ENCODE measurements at regions of chr9 and their contacts with region 1.

Region 1: GRCh38 chr9:127828262-127829031 is 25.8 kb downstream of the FPGS start:
- DNase-seq: peak; percentile 92 to 95 (median 93)
- ATAC-seq: peak; percentile 79 to 90 (median 86)
- H3K4me3 ChIP-seq: peak overlapping the region in 10 of 12 donors; percentile 15 to 44 (median 27)
- H3K27ac ChIP-seq: peak overlapping the region; percentile 68 to 96 (median 80)
- H3K4me1 ChIP-seq: peaks cover 12 to 84% (median 61%) of the 10 kb centered on the region in 12 donors
- H3K27me3 ChIP-seq: no peaks in the 10 kb centered on the region
- CTCF ChIP-seq: peak in 3 of 12 donors; percentile 19 to 33 (median 22)
- POLR2A ChIP-seq: peak in 1 of 2 donors; percentile 87

Region 2: DNA sequence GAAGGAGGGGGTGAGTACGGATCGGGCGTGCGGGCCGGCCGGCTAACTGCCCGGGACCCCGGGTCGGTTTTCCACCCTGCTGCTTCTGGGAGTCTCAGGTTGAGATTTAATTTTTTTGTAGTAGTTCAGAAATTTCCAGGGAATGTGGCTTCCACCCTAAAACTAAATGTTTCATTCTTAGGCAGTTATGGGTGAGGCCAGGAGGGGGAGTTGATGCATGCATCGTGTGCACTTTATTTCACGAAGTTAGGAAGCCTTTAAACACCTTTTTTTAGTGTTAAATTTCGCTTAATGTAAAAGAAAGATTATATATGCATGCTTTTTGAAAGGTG is 41.7 kb before region 1 on chr9:
- intact Hi-C with region 1: no loop called
- DNase-seq: no peak
- ATAC-seq: no peak
- H3K4me3 ChIP-seq: peak overlapping the region; percentile 76 to 100 (median 98)
- H3K27ac ChIP-seq: peak overlapping the region; percentile 88 to 100 (median 96)
- H3K4me1 ChIP-seq: peaks cover 0 to 76% (median 47%) of the 10 kb centered on the region in 12 donors
- H3K27me3 ChIP-seq: no peaks in the 10 kb centered on the region
- CTCF ChIP-seq: peak in 10 of 12 donors; percentile 6 to 57 (median 36)
- POLR2A ChIP-seq: no peak

Region 3: GRCh38 chr9:127809512-127810377 is 18.7 kb before region 1 on chr9:
- intact Hi-C with region 1: no loop called
- DNase-seq: peak in 1 of 5 donors; percentile 47
- ATAC-seq: peak in 2 of 4 donors; percentile 30 to 35
- H3K4me3 ChIP-seq: peak overlapping the region in 1 of 12 donors; percentile 25
- H3K27ac ChIP-seq: peak overlapping the region in 9 of 12 donors; percentile 9 to 76 (median 48)
- H3K4me1 ChIP-seq: peaks cover 0 to 25% (median 5%) of the 10 kb centered on the region in 12 donors
- H3K27me3 ChIP-seq: no peaks in the 10 kb centered on the region
- CTCF ChIP-seq: no peak
- POLR2A ChIP-seq: no peak

Region 4: GRCh38 chr9:127854184-127854806 is 25.8 kb after region 1 on chr9 and contains the start of gene ENG:
- intact Hi-C with region 1: loop called in 1 of 10 experiments (anchors 2 kb)
- DNase-seq: peak; percentile 91 to 94 (median 92)
- ATAC-seq: peak; percentile 54 to 83 (median 73)
- H3K4me3 ChIP-seq: peak within 1 kb of the TSS; percentile 49 to 94 (median 88)
- H3K27ac ChIP-seq: peak within 1 kb of the TSS; percentile 85 to 98 (median 95)
- H3K4me1 ChIP-seq: peaks cover 14 to 76% (median 51%) of the 10 kb centered on the region in 12 donors
- H3K27me3 ChIP-seq: no peaks in the 10 kb centered on the region
- CTCF ChIP-seq: no peak
- POLR2A ChIP-seq: peak in 1 of 2 donors; percentile 75
- total RNA-seq, gene ENG: 116 to 252 (median 133) TPM

Region 5: GRCh38 chr9:127862075-127863011 is 33.9 kb after region 1 on chr9:
- intact Hi-C with region 1: loop called in 6 of 10 experiments (anchors 2 to 5 kb)
- DNase-seq: peak; percentile 93 to 95 (median 93)
- ATAC-seq: peak; percentile 76 to 86 (median 84)
- H3K4me3 ChIP-seq: peak overlapping the region in 3 of 12 donors; percentile 2 to 12 (median 11)
- H3K27ac ChIP-seq: peak overlapping the region; percentile 80 to 98 (median 94)
- H3K4me1 ChIP-seq: peaks cover 34 to 79% (median 64%) of the 10 kb centered on the region in 12 donors
- H3K27me3 ChIP-seq: no peaks in the 10 kb centered on the region
- CTCF ChIP-seq: no peak
- POLR2A ChIP-seq: no peak

Region 6: GRCh38 chr9:127899128-127899946 is 70.9 kb after region 1 on chr9 and contains the start of gene ST6GALNAC6:
- intact Hi-C with region 1: no loop called
- DNase-seq: peak; percentile 78 to 91 (median 81)
- ATAC-seq: peak; percentile 59 to 88 (median 73)
- H3K4me3 ChIP-seq: peak within 1 kb of the TSS; percentile 57 to 98 (median 94)
- H3K27ac ChIP-seq: peak within 1 kb of the TSS; percentile 84 to 97 (median 93)
- H3K4me1 ChIP-seq: peaks cover 7 to 56% (median 46%) of the 10 kb centered on the region in 12 donors
- H3K27me3 ChIP-seq: no peaks in the 10 kb centered on the region
- CTCF ChIP-seq: peak in 5 of 12 donors; percentile 7 to 30 (median 16)
- POLR2A ChIP-seq: peak in 1 of 2 donors; percentile 58
- total RNA-seq, gene ST6GALNAC6: 28.4 to 75.9 (median 45.6) TPM

Measured in heart left ventricle (tissue), 16 donors.